H1 (cell line): ENCODE measurements at regions of chr19 and their contacts with region 1.

Region 1: DNA sequence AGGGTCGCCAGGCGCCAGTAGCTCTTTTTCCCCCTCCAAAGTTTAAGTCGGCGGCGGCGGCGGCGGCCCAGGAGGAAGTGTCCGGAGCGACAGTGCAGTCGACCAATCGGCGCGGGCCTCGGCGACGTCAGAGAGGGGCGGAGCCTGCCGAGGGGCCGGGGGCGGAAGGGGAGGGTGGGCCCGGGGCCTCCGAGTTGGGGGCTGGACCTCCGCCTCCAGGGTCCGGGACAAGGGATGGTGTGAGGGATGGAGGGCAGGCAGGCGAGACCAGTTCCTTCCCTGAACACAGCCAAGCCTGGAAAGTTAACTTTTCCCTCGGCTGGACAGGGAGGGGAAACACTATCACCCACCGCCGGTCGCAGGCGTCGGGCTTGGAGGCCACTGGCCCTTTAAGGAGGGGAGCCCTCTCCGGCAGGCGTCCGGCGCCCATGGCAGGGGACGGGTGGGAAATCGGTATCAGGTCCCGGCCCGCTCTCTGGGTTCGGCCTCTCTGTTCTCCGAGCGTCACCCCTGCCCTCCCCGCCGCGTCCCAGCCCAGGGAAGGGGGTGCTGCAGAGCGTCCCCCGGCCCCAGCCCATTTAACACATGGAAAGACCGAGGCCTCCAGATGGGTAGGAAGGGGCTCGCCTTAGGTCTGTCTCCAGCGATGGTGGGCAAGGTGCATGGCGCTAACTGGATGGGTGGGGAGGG is at the start of gene PRKD2:
- DNase-seq: peak in 1 of 2 experiments; percentile 100
- H3K4me3 ChIP-seq: peak within 1 kb of the TSS; percentile 76 to 94 (median 81)
- H3K27ac ChIP-seq: peak within 1 kb of the TSS; percentile 78
- H3K4me1 ChIP-seq: peaks cover 0 to 15% (median 6%) of the 10 kb centered on the region in 4 experiments; a peak in 5 of 7 replicates
- H3K27me3 ChIP-seq: no peaks in the 10 kb centered on the region
- CTCF ChIP-seq: no peak
- EP300 ChIP-seq: no peak
- POLR2A ChIP-seq: peak in 1 of 2 experiments; percentile 66; a peak in 2 of 3 replicates
- RAD21 ChIP-seq: no peak
- total RNA-seq, gene PRKD2: 63.8 and 73.1 TPM in 2 replicates

Region 2: DNA sequence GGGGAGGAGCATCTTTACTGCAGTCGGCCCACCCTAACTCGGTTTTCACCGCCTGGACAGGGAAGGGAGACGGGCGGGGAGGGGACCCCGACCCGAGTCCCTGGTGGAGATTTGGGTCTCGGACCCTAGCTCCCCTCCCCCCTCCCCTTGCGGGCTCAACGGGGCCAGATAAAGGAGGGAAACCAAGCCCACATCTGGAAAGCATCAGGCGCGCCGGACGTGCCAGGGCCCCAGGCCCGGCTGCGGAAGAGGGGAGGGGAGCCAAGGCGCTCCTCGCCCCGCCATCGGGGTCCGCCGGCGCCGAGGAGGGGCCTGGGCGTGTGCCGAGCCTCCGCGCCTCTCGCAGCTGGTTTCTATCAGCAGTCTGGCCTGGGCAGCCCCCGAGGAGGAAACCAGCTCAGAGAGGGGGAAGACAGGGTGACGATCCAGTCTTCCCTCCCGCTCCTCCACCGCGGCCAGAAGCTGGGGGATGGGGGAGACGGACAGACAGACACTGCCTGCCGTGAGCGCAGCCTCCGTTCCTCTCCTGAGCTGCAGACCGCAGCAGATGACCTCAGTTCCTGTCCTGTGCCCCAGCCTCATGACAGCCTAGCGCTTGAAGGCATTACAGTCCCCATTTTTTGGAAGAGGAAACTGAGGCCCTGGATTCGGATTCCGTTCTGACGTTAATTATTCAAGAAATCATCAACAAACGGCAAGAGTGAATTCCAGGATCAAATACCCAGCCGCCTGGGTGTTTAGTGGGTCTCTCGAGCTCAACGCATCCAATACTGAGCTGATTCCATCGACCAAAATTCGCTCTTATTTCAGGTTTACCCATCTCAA is 77.6 kb before region 1 on chr19:
- CTCF ChIA-PET with region 1: no interaction called
- POLR2A ChIA-PET with region 1: no interaction called
- DNase-seq: no peak
- H3K4me3 ChIP-seq: peak overlapping the region; percentile 38 to 67 (median 62)
- H3K27ac ChIP-seq: no peak overlapping the region
- H3K4me1 ChIP-seq: peaks cover 0 to 16% (median 6%) of the 10 kb centered on the region in 4 experiments; a peak in 5 of 7 replicates
- H3K27me3 ChIP-seq: peaks cover 5 to 48% (median 41%) of the 10 kb centered on the region in 4 experiments
- CTCF ChIP-seq: no peak
- EP300 ChIP-seq: no peak; a peak in 1 of 3 replicates
- POLR2A ChIP-seq: peak in 1 of 2 experiments; percentile 47; a peak in 1 of 3 replicates
- RAD21 ChIP-seq: no peak

Region 3: GRCh38 chr19:46697204-46697960 is 19.8 kb before region 1 on chr19:
- CTCF ChIA-PET with region 1: interaction called, 188 read pairs
- POLR2A ChIA-PET with region 1: interaction called, 18 read pairs
- DNase-seq: peak; percentile 96 to 99
- H3K4me3 ChIP-seq: peak overlapping the region; percentile 11 to 48 (median 38); a peak in 6 of 8 replicates
- H3K27ac ChIP-seq: no peak overlapping the region
- H3K4me1 ChIP-seq: peaks cover 0 to 8% (median 6%) of the 10 kb centered on the region in 4 experiments; a peak in 6 of 7 replicates
- H3K27me3 ChIP-seq: no peaks in the 10 kb centered on the region
- CTCF ChIP-seq: no peak
- EP300 ChIP-seq: no peak
- POLR2A ChIP-seq: no peak
- RAD21 ChIP-seq: no peak

Region 4: DNA sequence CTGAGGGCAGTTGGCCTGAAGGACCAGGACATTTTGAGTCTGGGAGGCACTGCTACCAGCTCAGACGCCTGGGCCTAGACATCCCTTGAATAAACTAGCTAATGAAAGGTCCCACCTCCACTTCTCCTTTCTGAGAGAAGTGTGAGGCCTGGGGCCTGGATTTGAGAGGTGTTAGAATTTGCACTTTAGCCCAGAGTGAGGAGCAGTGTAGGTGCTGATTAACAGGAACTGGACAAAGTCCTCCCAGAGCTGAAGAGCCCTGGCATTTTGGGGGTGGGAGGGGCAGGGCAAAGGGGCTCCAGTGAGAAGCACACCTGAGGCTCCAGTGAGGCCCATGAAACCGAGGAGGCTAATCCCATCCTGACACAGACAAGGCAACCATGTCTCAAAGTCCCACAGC is 86.4 kb after region 1 on chr19:
- CTCF ChIA-PET with region 1: no interaction called
- POLR2A ChIA-PET with region 1: no interaction called
- DNase-seq: no peak
- H3K4me3 ChIP-seq: no peak overlapping the region
- H3K27ac ChIP-seq: no peak overlapping the region
- H3K4me1 ChIP-seq: no peaks in the 10 kb centered on the region
- H3K27me3 ChIP-seq: no peaks in the 10 kb centered on the region
- CTCF ChIP-seq: no peak
- EP300 ChIP-seq: no peak
- POLR2A ChIP-seq: no peak
- RAD21 ChIP-seq: no peak

Region 5: DNA sequence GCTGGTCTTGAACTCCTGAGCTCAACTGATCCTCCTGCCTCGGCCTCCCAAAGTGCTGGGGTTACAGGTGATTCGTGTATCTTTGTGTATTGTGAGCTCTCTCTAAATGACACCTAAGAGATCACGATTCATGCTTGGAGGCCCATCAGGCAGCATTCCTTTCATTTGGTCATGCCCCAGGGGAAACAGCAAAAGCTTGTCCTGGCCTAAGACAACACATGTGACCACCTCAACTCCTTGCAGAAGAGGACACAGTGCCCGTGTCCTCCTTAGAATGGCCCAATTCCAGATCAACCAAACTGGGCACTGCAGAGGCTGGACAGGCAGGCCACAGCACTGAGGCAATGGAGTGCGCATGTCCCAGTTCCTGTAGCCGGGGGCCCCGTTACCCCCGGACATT is 363.9 kb after region 1 on chr19:
- CTCF ChIA-PET with region 1: no interaction called
- POLR2A ChIA-PET with region 1: no interaction called
- DNase-seq: no peak
- H3K4me3 ChIP-seq: no peak overlapping the region
- H3K27ac ChIP-seq: no peak overlapping the region
- H3K4me1 ChIP-seq: no peaks in the 10 kb centered on the region
- H3K27me3 ChIP-seq: no peaks in the 10 kb centered on the region
- CTCF ChIP-seq: no peak
- EP300 ChIP-seq: no peak
- POLR2A ChIP-seq: no peak
- RAD21 ChIP-seq: no peak